SK-N-SH (cell line): ENCODE measurements at regions of chr10 and their contacts with region 1.

Region 1: DNA sequence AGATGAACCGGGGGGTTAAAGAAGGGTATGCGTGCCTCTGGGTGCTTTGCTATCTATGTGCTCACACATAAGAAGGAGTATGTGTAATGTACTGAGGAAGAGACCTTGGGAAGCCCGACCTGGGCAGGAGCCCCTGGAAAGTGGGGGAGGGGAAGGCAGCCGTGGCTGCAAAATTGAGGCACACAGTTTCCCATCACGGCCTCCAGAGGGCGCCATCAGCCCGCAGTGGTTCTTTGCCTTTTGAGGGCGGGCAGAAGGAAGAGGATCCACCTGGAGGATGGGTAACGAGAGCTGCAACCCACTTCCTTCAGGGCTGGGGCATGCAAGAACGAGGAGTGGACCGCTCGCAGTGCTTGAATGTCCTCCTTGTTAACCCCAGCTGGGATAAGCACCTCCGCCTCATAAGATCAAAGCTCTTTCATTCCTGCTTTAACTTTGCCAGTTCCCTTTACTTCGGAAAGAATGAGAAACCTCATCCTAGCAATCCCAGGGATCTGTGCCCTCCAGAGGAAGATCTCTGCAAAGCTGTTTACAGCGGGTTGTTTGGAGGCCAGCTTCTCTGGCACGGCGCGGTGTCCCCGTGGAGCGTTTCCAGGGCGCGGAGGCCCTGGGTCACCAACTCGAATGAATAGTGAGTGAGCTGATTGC is 77.9 kb downstream of the PCGF5 start:
- DNase-seq: peak; percentile 82
- H3K4me3 ChIP-seq: no peak overlapping the region
- H3K27ac ChIP-seq: no peak overlapping the region
- H3K4me1 ChIP-seq: peaks cover 9 to 18% of the 10 kb centered on the region in 2 experiments
- H3K27me3 ChIP-seq: no peaks in the 10 kb centered on the region
- CTCF ChIP-seq: peak; percentile 87
- EP300 ChIP-seq: no peak
- RAD21 ChIP-seq: peak; percentile 95

Region 2: GRCh38 chr10:90912174-90912573 is 386.2 kb before region 1 on chr10:
- CTCF ChIA-PET with region 1: interaction called, 23 read pairs
- POLR2A ChIA-PET with region 1: no interaction called
- DNase-seq: no peak
- H3K4me3 ChIP-seq: no peak overlapping the region
- H3K27ac ChIP-seq: peak overlapping the region; percentile 30 to 67; a peak in 2 of 4 replicates
- H3K4me1 ChIP-seq: peaks cover 4 to 7% of the 10 kb centered on the region in 2 experiments; a peak in 2 of 4 replicates
- H3K27me3 ChIP-seq: no peaks in the 10 kb centered on the region
- CTCF ChIP-seq: no peak
- EP300 ChIP-seq: no peak
- RAD21 ChIP-seq: no peak

Region 3: GRCh38 chr10:91190876-91191583 is 107.3 kb before region 1 on chr10:
- CTCF ChIA-PET with region 1: no interaction called
- POLR2A ChIA-PET with region 1: no interaction called
- DNase-seq: no peak
- H3K4me3 ChIP-seq: 0 out of 4 replicates have a peak overlapping the region, but pooled peaks of 1 of the 2 experiments have one; percentile 4
- H3K27ac ChIP-seq: peak overlapping the region in 1 of 2 experiments; percentile 98; a peak in 3 of 4 replicates
- H3K4me1 ChIP-seq: peaks cover 0 to 17% of the 10 kb centered on the region in 2 experiments; a peak in 2 of 4 replicates
- H3K27me3 ChIP-seq: no peaks in the 10 kb centered on the region
- CTCF ChIP-seq: peak; percentile 18; the same call in 1 of the 2 replicates
- EP300 ChIP-seq: peak in 1 of 2 experiments; percentile 68; a peak in 2 of 4 replicates
- RAD21 ChIP-seq: no peak

Region 4: GRCh38 chr10:91313796-91314485 is 15.6 kb after region 1 on chr10:
- CTCF ChIA-PET with region 1: interaction called, 23 read pairs
- POLR2A ChIA-PET with region 1: no interaction called
- DNase-seq: no peak
- H3K4me3 ChIP-seq: no peak overlapping the region
- H3K27ac ChIP-seq: peak overlapping the region in 1 of 2 experiments; percentile 44; a peak in 1 of 4 replicates
- H3K4me1 ChIP-seq: peaks cover 3 to 14% of the 10 kb centered on the region in 2 experiments; a peak in 2 of 4 replicates
- H3K27me3 ChIP-seq: no peaks in the 10 kb centered on the region
- CTCF ChIP-seq: no peak
- EP300 ChIP-seq: no peak
- RAD21 ChIP-seq: no peak

Region 5: GRCh38 chr10:91367558-91367957 is 69.2 kb after region 1 on chr10:
- CTCF ChIA-PET with region 1: interaction called, 25 read pairs
- POLR2A ChIA-PET with region 1: no interaction called
- DNase-seq: no peak
- H3K4me3 ChIP-seq: no peak overlapping the region
- H3K27ac ChIP-seq: no peak overlapping the region
- H3K4me1 ChIP-seq: no peaks in the 10 kb centered on the region
- H3K27me3 ChIP-seq: no peaks in the 10 kb centered on the region
- CTCF ChIP-seq: no peak
- EP300 ChIP-seq: no peak
- RAD21 ChIP-seq: no peak

Region 6: DNA sequence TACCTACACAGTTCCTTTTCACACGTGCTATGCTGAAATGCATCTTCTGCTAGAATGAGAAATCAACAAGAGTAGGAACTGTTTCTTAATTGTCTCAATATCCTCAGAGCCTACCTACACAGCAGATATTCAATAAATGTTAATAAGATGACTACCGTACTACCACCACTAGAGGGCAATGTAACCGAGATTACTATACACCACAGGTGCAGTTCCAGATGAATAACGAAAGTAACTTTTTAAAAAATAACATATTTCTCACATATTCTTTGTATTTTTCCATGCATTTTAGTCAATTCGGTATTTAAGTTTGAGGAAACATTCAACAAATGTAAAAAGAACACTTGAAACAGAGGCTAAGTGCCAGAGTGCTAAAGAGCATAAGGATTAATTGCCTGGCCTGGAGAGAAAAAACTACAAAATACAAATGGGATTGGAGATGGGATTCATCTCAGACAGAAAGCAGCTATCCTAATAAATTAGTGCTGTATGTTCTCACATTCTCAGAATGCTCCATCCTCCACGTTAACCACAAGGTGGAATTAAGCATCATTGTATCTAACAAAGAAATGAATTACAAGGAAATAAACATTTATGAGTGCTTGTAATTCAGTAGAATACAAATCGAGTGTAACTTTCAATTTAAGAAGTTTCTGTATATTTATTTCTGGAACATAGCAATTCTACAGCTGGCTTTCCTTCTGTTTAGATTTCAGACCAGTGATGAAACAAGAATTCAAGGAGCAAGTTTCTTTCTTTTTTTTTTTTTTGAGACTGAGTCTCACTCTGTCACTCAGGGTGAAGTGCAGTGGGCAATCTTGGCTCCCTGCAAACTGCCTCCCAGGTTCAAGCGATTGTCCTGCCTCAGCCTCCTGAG is 91.5 kb after region 1 on chr10:
- CTCF ChIA-PET with region 1: interaction called, 29 read pairs
- POLR2A ChIA-PET with region 1: no interaction called
- DNase-seq: peak; percentile 31
- H3K4me3 ChIP-seq: no peak overlapping the region
- H3K27ac ChIP-seq: no peak overlapping the region
- H3K4me1 ChIP-seq: no peaks in the 10 kb centered on the region; a peak in 1 of 4 replicates
- H3K27me3 ChIP-seq: no peaks in the 10 kb centered on the region
- CTCF ChIP-seq: peak; percentile 72
- EP300 ChIP-seq: no peak
- RAD21 ChIP-seq: peak; percentile 64

Region 7: GRCh38 chr10:91551856-91552255 is 253.5 kb after region 1 on chr10:
- CTCF ChIA-PET with region 1: interaction called, 17 read pairs
- POLR2A ChIA-PET with region 1: no interaction called
- DNase-seq: peak; percentile 55
- H3K4me3 ChIP-seq: no peak overlapping the region
- H3K27ac ChIP-seq: no peak overlapping the region
- H3K4me1 ChIP-seq: peaks cover 0 to 5% of the 10 kb centered on the region in 2 experiments; a peak in 2 of 4 replicates
- H3K27me3 ChIP-seq: no peaks in the 10 kb centered on the region
- CTCF ChIP-seq: peak; percentile 68
- EP300 ChIP-seq: no peak
- RAD21 ChIP-seq: peak; percentile 77

Region 8: DNA sequence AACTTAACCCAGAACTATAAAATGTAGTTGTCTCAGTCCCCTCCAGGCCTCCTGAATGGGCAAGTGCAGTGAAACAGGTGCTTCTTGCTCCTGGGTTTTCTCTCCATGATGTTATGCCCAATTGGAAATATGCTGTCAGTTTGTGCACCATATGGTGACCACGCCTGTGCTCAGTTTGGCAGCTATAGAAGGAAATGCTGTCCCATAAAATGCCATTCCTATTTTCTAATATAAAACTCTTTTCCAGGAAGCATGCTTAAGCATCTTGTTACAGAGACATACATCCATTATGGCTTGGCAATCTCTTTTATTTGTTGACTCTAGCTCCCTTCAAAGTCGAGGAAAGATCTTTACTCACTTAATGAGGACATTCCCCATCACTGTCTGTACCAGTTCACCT is 565.8 kb after region 1 on chr10:
- CTCF ChIA-PET with region 1: no interaction called
- POLR2A ChIA-PET with region 1: no interaction called
- DNase-seq: no peak
- H3K4me3 ChIP-seq: no peak overlapping the region
- H3K27ac ChIP-seq: no peak overlapping the region
- H3K4me1 ChIP-seq: no peaks in the 10 kb centered on the region; a peak in 1 of 4 replicates
- H3K27me3 ChIP-seq: no peaks in the 10 kb centered on the region
- CTCF ChIP-seq: no peak
- EP300 ChIP-seq: no peak
- RAD21 ChIP-seq: no peak